ENCODE measurements at regions of chr12 and their contacts with region 1.

Region 1: DNA sequence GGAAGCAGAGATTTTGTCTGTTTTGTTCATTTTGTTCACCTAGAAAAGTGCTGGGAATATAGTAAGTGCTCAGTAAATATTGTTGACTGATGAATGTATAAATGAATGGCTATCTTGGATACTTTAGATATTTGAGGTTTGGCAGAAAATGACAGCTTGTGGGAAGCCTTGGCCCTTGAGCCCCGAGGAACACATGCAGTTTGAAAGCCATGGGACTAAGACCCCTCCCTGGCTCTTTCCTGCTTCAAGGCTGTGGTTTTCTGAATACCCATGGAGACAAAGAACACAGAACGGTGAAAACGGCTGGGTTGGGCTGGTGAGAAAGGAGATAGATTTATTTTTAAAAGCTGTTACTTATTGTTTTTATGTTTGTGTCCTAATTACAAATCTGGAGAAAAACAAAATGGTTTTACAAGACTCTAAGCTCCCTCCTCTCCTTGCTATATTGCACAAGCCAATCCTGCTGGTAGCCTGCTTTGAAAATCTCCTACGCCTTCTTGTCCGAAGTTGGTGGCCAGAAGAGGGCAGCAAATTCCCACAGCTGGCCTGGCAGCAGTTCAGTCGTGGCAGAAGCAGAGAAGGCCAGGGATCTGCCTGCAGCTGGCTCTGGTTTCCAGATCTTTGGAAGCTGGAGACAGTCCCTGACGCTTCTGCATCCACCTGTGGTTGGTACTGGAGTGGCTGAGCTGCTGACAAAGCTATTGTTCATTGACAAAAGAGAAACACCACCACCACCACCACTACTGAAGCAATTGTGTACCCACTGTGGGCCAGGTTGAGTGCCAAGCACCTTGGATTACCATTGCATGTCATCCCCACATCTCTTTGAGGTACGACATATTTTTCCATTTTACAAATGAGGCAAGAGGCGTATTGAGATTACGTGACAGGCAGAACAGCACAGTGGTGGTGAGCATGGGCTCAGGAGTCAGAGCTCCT is 5.2 kb upstream of the KRT85 start:
- DNase-seq: peak; percentile 73 to 84
- H3K4me3 ChIP-seq: no peak overlapping the region
- H3K27ac ChIP-seq: no peak overlapping the region
- H3K4me1 ChIP-seq: peaks cover 9% of the 10 kb centered on the region
- H3K27me3 ChIP-seq: no peaks in the 10 kb centered on the region
- CTCF ChIP-seq: peak; percentile 90

Region 2: DNA sequence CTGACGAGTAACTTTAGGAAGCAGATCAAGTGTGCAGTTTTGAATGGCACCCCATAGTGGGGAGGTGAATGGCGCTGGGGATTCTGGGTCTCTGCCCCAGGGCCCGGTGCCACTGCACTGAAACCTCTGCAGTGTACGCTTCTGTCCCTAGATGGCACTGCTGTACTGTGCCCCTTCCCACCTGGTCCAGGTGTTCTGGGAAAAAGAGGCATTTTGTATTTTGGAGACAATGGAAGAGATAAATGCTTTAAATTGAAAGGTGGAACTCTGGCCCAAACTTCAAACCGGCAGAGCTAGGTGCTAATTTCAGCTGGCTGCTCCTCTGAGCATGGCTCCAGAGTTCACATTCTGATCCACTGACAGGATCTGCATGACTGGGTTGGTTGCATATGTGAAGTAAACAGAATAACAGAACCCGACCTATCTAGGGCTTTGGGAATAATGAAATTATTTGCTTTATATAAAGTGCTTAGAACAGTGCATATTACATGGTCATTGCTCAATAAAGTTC is 232.9 kb before region 1 on chr12:
- CTCF ChIA-PET with region 1: no interaction called
- POLR2A ChIA-PET with region 1: interaction called, 3 read pairs
- intact Hi-C with region 1: loop called (anchors 2 kb)
- DNase-seq: peak; percentile 62 to 78
- H3K4me3 ChIP-seq: no peak overlapping the region
- H3K27ac ChIP-seq: no peak overlapping the region
- H3K4me1 ChIP-seq: peaks cover 22% of the 10 kb centered on the region
- H3K27me3 ChIP-seq: no peaks in the 10 kb centered on the region
- CTCF ChIP-seq: peak; percentile 94

Region 3: DNA sequence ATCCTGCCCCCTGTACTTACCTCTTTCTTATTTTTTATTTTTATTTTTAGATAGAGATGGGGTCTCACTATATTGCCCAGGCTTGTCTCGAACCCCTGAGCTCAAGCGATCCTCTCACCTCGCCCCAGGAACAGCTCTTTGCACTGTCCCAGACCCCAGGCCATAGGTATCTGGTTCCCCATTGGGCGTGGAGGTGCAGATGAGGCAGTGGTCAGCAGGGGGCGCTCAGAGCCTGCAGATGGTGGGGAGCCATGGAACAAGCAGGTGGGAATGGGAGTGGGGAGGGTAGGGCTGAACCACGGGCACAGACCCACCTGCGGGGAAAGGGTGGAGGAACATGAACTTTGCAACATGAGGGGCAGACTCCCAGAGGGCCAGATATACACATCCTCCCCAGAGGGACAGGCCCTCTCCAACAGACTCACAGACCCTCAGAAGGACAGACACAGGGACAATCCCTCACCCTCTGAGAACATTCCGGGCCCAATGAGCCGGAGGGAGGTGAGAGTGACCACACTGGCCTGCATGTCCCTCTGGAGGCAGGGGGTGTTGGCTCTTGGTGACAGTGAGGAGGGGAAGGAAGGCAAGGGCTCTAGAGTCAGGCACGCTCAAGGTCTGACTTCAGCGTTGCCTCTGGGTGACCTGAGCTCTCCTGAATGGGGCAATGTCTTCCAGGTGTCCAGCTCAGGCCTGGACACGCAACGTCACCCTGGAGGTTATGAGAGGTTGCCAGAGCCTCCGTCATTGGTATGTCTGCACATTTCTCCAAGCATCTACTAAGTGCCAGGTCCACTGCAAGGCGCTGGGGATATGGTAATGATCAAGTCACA is 215.5 kb before region 1 on chr12:
- CTCF ChIA-PET with region 1: interaction called, 10 read pairs
- POLR2A ChIA-PET with region 1: no interaction called
- intact Hi-C with region 1: loop called (anchors 2 kb)
- DNase-seq: peak; percentile 54 to 82
- H3K4me3 ChIP-seq: no peak overlapping the region
- H3K27ac ChIP-seq: no peak overlapping the region
- H3K4me1 ChIP-seq: peaks cover 58% of the 10 kb centered on the region
- H3K27me3 ChIP-seq: no peaks in the 10 kb centered on the region
- CTCF ChIP-seq: peak; percentile 99

Region 4: GRCh38 chr12:52258335-52258901 is 114.1 kb before region 1 on chr12:
- CTCF ChIA-PET with region 1: no interaction called
- POLR2A ChIA-PET with region 1: no interaction called
- intact Hi-C with region 1: no loop called
- DNase-seq: no peak
- H3K4me3 ChIP-seq: no peak overlapping the region
- H3K27ac ChIP-seq: no peak overlapping the region
- H3K4me1 ChIP-seq: 0 out of 2 replicates have a peak, but pooled peaks cover 8% of the 10 kb centered on the region
- H3K27me3 ChIP-seq: no peaks in the 10 kb centered on the region
- CTCF ChIP-seq: no peak

Region 5: GRCh38 chr12:52327052-52327829 is 45.2 kb before region 1 on chr12:
- CTCF ChIA-PET with region 1: interaction called, 3 read pairs
- POLR2A ChIA-PET with region 1: interaction called, 4 read pairs
- intact Hi-C with region 1: loop called (anchors 5 kb)
- DNase-seq: peak; percentile 86 to 94
- H3K4me3 ChIP-seq: no peak overlapping the region
- H3K27ac ChIP-seq: no peak overlapping the region
- H3K4me1 ChIP-seq: peaks cover 12% of the 10 kb centered on the region
- H3K27me3 ChIP-seq: no peaks in the 10 kb centered on the region
- CTCF ChIP-seq: peak; percentile 85

Region 6: DNA sequence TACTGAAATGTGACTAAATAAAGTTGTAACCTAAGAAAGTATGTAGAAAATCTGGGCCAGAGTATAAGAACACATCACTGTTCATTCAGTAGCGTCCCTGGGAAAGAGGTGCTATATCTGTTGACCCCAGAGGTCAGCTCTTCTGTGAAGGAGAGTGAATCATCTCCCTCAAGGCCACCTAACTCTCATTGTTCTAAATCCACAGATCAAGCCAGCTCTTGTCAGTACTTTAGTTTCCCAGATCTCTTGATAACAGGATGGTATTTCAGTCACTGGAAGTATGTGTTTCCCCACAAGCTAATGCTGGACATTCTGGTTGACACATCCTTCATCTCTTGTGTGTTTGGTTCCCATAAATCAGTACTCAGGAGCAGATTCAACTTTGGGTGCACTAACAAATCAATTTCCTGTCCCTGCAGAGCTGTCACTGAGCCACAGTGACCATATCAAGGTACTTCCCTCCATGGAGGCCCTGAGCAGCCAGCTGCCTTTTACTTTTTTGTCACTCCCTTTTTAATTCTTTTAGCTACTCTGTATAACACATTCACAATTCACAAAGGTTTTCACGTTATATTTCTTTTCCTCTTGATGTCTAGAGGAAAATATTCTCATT is 299.9 kb after region 1 on chr12:
- CTCF ChIA-PET with region 1: no interaction called
- POLR2A ChIA-PET with region 1: no interaction called
- intact Hi-C with region 1: loop called (anchors 1 kb)
- DNase-seq: peak; percentile 55 to 98
- H3K4me3 ChIP-seq: no peak overlapping the region
- H3K27ac ChIP-seq: peak overlapping the region; percentile 86
- H3K4me1 ChIP-seq: peaks cover 35% of the 10 kb centered on the region
- H3K27me3 ChIP-seq: no peaks in the 10 kb centered on the region
- CTCF ChIP-seq: no peak

Region 7: GRCh38 chr12:52799062-52799761 is 426.7 kb after region 1 on chr12:
- CTCF ChIA-PET with region 1: interaction called, 13 read pairs
- POLR2A ChIA-PET with region 1: no interaction called
- intact Hi-C with region 1: no loop called
- DNase-seq: peak; percentile 67 to 97
- H3K4me3 ChIP-seq: no peak overlapping the region
- H3K27ac ChIP-seq: peak overlapping the region; percentile 88
- H3K4me1 ChIP-seq: peaks cover 65% of the 10 kb centered on the region
- H3K27me3 ChIP-seq: no peaks in the 10 kb centered on the region
- CTCF ChIP-seq: no peak

Measured in PC-9 (cell line).